Activated CD4-positive, alpha-beta T cell treated with anti-CD3 and anti-CD28 coated beads, Interleukin-2, amount 10 ng/mL, durations not matched to agents 24 days and 14 days (primary cell): ENCODE measurements at regions of chr6 and their contacts with region 1.

Region 1: DNA sequence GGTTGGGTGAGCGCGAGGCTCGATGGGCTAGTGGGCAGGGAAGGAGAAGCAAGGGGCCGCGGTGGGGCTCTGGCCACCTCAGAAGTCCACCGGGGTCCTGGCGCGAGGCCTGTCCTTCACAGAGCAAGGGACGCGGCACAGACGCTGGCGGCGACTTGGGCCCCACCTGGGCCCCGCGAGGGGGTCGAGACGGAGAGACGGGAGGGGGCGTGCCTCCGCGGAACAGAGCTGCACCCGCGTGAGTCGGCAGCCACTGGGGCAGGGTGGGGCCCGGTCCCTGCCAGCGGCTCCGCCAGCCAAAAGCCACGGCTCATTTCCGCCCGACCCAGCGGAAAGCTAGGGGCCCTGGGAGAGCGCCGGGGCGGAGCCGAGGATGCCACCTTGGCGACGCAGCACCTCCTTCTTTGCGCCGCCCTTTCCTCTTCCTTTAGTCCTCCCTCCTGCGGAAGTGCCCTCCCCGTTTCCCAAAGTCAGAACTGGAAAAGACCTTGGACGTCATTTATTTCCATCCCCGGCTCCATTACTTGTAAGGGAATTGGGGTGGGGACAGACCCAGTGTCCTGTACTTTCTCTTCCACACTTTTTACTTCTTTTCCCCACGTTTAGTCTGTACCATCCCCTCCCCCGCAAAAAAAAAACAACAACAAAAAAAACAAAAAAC is at the start of gene CUL7:
- DNase-seq: peak; percentile 98
- H3K4me3 Mint-ChIP-seq: peak within 1 kb of the TSS; percentile 96
- H3K27ac Mint-ChIP-seq: peak within 1 kb of the TSS; percentile 98
- H3K4me1 Mint-ChIP-seq: peaks cover 43% of the 10 kb centered on the region
- H3K27me3 Mint-ChIP-seq: no peaks in the 10 kb centered on the region
- total RNA-seq, gene CUL7: 22.6 and 24.7 TPM in 2 replicates

Region 2: GRCh38 chr6:42978839-42979522 is 74.7 kb before region 1 on chr6 and contains the start of gene PEX6:
- intact Hi-C with region 1: loop called (anchors 2 kb)
- DNase-seq: peak; percentile 99
- H3K4me3 Mint-ChIP-seq: peak within 1 kb of the TSS; percentile 91
- H3K27ac Mint-ChIP-seq: peak within 1 kb of the TSS; percentile 97
- H3K4me1 Mint-ChIP-seq: peaks cover 34% of the 10 kb centered on the region
- H3K27me3 Mint-ChIP-seq: no peaks in the 10 kb centered on the region
- total RNA-seq, gene PEX6: 24.0 and 24.1 TPM in 2 replicates

Region 3: GRCh38 chr6:43021270-43022047 is 32.2 kb before region 1 on chr6 and contains the start of gene RRP36:
- intact Hi-C with region 1: loop called (anchors 1 kb)
- DNase-seq: peak; percentile 92
- H3K4me3 Mint-ChIP-seq: peak within 1 kb of the TSS; percentile 94
- H3K27ac Mint-ChIP-seq: peak within 1 kb of the TSS; percentile 86
- H3K4me1 Mint-ChIP-seq: peaks cover 33% of the 10 kb centered on the region
- H3K27me3 Mint-ChIP-seq: no peaks in the 10 kb centered on the region
- total RNA-seq, gene RRP36: 79.9 and 83.4 TPM in 2 replicates

Region 4: DNA sequence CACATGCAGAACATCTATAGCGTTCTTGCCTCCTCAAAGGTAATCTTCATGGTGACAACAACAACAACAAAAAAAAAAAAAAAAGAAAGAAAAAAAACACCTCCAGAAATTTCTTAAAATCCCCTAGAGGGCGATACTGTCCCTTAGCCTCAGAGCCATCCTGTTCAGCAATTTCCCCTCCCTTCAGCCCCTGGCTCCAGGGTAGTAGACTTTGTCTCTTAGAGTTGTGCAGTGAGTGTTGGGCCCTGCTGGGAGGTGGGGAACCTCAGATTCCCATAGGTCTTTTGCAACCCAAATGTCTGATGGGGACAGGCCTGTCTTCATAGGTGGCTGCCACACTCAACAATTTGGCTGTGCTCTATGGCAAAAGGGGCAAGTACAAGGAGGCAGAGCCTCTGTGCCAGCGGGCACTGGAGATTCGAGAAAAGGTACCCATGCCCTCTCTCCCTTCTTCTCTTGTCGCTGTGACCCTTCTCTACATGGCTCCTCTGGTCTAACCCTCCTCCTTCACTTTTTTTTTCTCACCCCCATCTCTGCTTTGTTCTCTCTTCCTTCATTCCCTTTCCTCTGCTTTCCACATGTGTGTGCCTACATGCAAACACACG is 16.5 kb after region 1 on chr6:
- intact Hi-C with region 1: no loop called
- DNase-seq: peak; percentile 76
- H3K4me3 Mint-ChIP-seq: no peak overlapping the region
- H3K27ac Mint-ChIP-seq: no peak overlapping the region
- H3K4me1 Mint-ChIP-seq: peaks cover 2% of the 10 kb centered on the region
- H3K27me3 Mint-ChIP-seq: peaks cover 3% of the 10 kb centered on the region